ENCODE measurements at regions of chr6 and their contacts with region 1.

Region 1: DNA sequence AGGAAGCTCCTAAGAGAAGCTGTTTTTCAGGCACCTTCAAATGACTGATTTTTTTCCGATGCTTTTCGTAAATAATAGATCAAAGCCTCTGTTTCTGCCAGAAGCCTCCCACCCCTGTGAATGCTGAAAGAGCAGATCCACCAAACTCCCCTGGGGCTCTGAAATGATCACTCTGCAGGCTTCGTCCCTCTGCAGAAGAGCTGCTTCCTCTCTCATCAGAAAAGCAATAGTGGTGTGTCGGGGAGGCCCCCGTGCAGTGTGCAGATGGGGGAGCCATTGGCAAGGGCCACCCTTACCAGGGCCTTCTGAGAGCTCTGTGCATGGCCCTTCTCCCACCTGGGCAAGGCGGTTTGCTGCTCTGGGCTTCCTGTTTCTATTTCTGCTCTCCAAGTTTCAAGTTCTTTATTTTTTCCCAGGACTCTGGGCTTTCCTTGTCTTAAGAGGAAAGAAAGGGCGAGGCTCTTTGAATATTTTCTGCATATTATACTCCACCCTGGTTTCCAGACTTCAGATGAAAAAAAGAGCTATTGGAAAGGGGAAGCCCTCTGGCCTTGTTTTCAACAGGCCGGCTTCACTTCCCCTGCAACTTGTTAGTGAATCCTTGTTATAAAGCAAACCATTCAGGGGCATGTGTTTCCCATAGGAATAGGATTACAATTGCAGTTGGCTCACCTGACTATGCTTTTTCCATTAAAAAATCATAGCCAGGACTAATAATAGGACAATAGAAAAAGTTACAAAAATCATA is 155.2 kb downstream of the TTLL2 start:
- DNase-seq: no peak

Region 2: DNA sequence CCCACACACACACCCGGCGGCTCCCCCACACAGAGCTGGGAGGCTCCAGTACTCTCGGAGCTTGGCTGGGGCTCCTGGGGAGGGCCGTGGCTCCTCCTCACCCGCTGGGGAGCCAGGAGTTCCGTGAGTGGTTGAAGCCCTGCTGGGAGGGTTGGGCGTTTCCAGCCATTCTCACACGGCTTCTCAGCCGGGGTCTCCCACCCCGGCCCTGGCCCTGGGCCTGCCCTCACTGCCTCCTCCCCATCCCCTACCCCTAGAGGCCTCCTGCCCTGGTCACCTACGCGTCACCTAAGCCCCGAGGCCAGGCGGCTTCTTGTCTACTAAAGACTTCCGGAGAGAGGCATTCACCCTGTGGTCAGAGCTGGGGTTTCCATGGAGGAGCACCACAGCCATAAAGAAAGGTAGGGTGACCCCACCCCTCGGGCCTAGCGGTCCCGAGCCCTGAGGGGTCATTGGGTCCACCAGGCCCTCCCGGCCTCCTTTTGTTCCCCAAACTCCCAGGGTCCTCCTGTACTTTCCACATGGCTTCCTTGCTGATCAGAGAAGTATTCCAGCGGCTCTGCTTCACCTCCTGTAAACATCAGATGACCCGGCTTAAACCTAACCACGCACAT is 55.9 kb before region 1 on chr6:
- intact Hi-C with region 1: no loop called
- DNase-seq: peak in 2 of 42 donors; percentile 33 to 34

Region 3: GRCh38 chr6:168120390-168121302 is 640.6 kb after region 1 on chr6:
- intact Hi-C with region 1: loop called (anchors 10 kb)
- DNase-seq: peak in 7 of 42 donors; percentile 1 to 35 (median 8)

Measured in head of caudate nucleus (tissue), 42 donors.